ENCODE measurements at regions of chr4 and their contacts with region 1.

Region 1: DNA sequence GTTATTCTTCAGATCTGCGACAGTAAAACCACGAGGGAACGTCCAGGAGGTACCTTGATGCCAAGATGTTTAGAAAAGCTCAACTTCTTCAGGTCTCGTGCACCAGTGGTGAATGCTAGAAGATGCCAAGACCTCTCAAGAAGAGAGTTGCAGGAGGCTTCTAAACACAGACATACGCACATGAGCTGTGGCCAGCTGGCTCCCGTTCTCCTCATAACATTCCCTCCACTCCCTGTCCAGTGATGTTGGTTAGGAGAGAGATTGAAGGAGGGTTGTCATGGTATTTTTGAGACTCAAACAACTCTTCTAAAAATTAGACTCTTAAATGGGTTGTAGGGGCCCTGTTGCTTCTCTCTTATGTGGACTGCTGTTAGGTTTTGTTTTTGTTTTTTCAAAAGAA is 184.3 kb downstream of the QDPR start:
- DNase-seq: no peak
- ATAC-seq: no peak
- H3K4me3 ChIP-seq: no peak overlapping the region
- H3K27ac ChIP-seq: no peak overlapping the region
- H3K4me1 ChIP-seq: no peaks in the 10 kb centered on the region
- H3K27me3 ChIP-seq: no peaks in the 10 kb centered on the region
- CTCF ChIP-seq: no peak

Region 2: DNA sequence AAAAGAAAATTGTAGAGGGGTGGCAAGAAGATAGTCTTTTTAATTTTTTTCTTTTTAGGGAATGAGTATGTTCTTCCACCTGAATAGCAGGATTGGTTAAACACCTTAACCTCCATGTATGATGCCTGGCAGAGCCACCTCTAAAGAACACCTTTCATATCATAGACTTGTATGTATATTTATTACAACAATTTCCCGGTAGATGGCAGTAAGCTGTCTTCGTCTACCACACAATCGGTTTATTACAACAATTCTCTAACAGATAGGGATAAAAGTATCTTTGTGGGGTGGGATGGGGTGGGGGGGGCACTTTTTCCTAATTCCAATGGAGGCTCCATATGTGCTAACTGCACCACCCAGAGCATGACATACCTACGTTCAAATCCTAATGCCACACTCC is 684.7 kb before region 1 on chr4:
- CTCF ChIA-PET with region 1: no interaction called
- POLR2A ChIA-PET with region 1: no interaction called
- in situ Hi-C with region 1: no loop called
- intact Hi-C with region 1: loop called (anchors 5 kb)
- DNase-seq: no peak
- ATAC-seq: no peak
- H3K4me3 ChIP-seq: no peak overlapping the region
- H3K27ac ChIP-seq: no peak overlapping the region
- H3K4me1 ChIP-seq: no peaks in the 10 kb centered on the region
- H3K27me3 ChIP-seq: no peaks in the 10 kb centered on the region
- CTCF ChIP-seq: peak; percentile 54

Region 3: DNA sequence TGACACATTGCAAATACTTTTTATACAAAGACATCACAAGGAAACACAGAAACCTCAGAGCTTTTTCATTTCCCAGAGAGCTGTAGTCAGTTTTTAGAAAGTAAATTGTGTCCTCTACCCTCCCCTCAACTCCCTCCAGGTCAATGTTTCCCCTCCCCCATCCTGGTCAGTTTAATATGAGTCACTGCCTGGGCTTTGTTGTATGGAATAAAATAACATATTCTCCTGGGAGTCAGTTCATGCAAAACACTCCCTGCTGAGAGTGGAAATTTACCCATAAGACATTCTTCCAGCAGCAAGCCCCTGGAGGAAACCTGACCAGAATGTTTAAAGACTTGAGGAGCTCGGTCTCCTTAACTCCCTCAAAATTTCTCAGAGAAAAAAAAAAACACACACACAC is 159.0 kb before region 1 on chr4:
- CTCF ChIA-PET with region 1: no interaction called
- POLR2A ChIA-PET with region 1: no interaction called
- in situ Hi-C with region 1: no loop called
- intact Hi-C with region 1: no loop called
- DNase-seq: no peak
- ATAC-seq: no peak
- H3K4me3 ChIP-seq: no peak overlapping the region
- H3K27ac ChIP-seq: no peak overlapping the region
- H3K4me1 ChIP-seq: no peaks in the 10 kb centered on the region
- H3K27me3 ChIP-seq: no peaks in the 10 kb centered on the region
- CTCF ChIP-seq: no peak

Region 4: GRCh38 chr4:17511950-17512795 is 184.6 kb after region 1 on chr4 and contains the start of gene QDPR:
- CTCF ChIA-PET with region 1: no interaction called
- POLR2A ChIA-PET with region 1: no interaction called
- in situ Hi-C with region 1: no loop called
- intact Hi-C with region 1: no loop called
- DNase-seq: peak; percentile 20
- ATAC-seq: peak; percentile 99
- H3K4me3 ChIP-seq: peak within 1 kb of the TSS; percentile 60 to 65
- H3K27ac ChIP-seq: peak within 1 kb of the TSS; percentile 72
- H3K4me1 ChIP-seq: peaks cover 3% of the 10 kb centered on the region; the same call in 1 of the 2 replicates
- H3K27me3 ChIP-seq: no peaks in the 10 kb centered on the region; the same call in 1 of the 2 replicates
- CTCF ChIP-seq: peak; percentile 84
- total RNA-seq, gene QDPR: 15.2 TPM

Region 5: GRCh38 chr4:18278244-18278643 is 950.7 kb after region 1 on chr4:
- CTCF ChIA-PET with region 1: no interaction called
- POLR2A ChIA-PET with region 1: no interaction called
- in situ Hi-C with region 1: no loop called
- intact Hi-C with region 1: no loop called
- DNase-seq: no peak
- ATAC-seq: no peak
- H3K4me3 ChIP-seq: no peak overlapping the region
- H3K27ac ChIP-seq: no peak overlapping the region
- H3K4me1 ChIP-seq: no peaks in the 10 kb centered on the region
- H3K27me3 ChIP-seq: no peaks in the 10 kb centered on the region
- CTCF ChIP-seq: no peak

Measured in Panc1 (cell line).